ENCODE measurements at regions of chr15 and their contacts with region 1.

Region 1: GRCh38 chr15:45022871-45023658 is at the start of gene SORD:
- DNase-seq: peak; percentile 86 to 91
- H3K4me3 ChIP-seq: peak within 1 kb of the TSS; percentile 57 to 75
- H3K27ac ChIP-seq: peak within 1 kb of the TSS; percentile 37 to 74
- H3K4me1 ChIP-seq: no peaks in the 10 kb centered on the region
- H3K27me3 ChIP-seq: no peaks in the 10 kb centered on the region
- CTCF ChIP-seq: no peak
- POLR2A ChIP-seq: peak in 1 of 2 donors; percentile 50
- total RNA-seq, gene SORD: 4.9 to 30.6 (median 19.3) TPM

Region 2: GRCh38 chr15:44861439-44861910 is 161.6 kb before region 1 on chr15:
- intact Hi-C with region 1: loop called (anchors 10 kb)
- DNase-seq: no peak
- H3K4me3 ChIP-seq: no peak overlapping the region
- H3K27ac ChIP-seq: no peak overlapping the region
- H3K4me1 ChIP-seq: no peaks in the 10 kb centered on the region
- H3K27me3 ChIP-seq: no peaks in the 10 kb centered on the region
- CTCF ChIP-seq: no peak
- POLR2A ChIP-seq: no peak

Region 3: GRCh38 chr15:45198337-45199135 is 175.5 kb after region 1 on chr15:
- intact Hi-C with region 1: no loop called
- DNase-seq: peak; percentile 97 to 98
- H3K4me3 ChIP-seq: peak overlapping the region; percentile 51 to 81
- H3K27ac ChIP-seq: peak overlapping the region; percentile 94 to 97
- H3K4me1 ChIP-seq: no peaks in the 10 kb centered on the region
- H3K27me3 ChIP-seq: no peaks in the 10 kb centered on the region
- CTCF ChIP-seq: peak; percentile 61 to 78 (median 72)
- POLR2A ChIP-seq: peak; percentile 81 to 96

Measured in uterus (tissue), 4 donors.